ENCODE measurements at regions of chr1 and their contacts with region 1.

Region 1: GRCh38 chr1:50929376-50929958 is 30.6 kb downstream of the FAF1 start:
- DNase-seq: no peak
- ATAC-seq: no peak

Region 2: GRCh38 chr1:50047916-50048694 is 881.4 kb before region 1 on chr1:
- intact Hi-C with region 1: no loop called
- DNase-seq: peak; percentile 29
- ATAC-seq: peak; percentile 71 to 88

Region 3: DNA sequence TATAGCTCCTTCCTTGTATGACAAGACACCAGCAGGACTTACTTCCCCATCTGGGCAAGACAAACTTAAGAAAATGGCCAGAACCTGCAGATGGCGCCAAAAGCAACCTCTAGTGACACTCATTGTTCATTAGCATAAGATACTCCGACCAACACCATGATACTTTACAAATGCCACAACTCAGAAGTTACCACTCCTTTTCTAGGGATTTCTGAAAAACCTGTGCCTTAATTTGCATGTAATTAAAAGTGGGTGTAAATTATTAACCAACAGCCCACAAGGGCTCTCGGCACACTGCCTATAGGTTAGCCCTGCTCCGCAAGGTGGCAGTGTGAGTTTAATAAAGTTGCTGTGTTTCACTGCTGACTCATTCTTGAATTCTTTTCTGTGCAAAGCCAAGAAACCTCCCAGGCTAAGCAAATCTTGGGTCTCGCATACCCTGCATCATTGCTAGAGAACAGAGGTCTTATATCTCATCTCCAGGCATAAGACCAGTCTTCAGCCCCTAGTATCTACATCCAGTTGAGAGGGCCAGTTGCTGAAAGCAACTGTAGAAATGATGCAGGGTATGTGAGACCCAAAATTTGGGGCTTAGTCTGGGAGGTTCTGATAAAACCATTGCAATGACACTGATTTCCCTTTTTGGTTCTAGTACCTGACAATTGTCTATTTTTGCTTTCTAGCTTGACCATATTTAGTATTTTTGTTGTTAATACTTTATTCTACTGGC is 55.8 kb before region 1 on chr1:
- intact Hi-C with region 1: no loop called
- DNase-seq: peak; percentile 39
- ATAC-seq: peak in 1 of 2 donors; percentile 40

Region 4: DNA sequence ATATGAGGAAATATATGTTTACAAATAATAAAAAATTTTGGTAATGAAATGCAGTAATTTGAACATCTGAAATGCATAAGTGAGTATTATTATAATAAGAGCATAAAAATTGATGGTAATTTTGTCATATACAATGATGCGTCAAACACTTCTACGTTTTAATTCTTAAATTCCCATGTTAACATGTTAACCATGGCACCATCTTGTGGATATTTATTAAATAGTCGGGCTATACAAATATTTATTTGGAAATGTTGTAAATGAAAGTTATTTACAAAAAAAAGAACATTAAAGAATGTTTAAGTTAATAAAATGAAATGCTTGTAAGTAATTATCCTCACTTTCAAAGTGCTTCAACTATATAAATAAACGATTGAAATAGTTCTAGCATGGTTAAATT is 115.4 kb after region 1 on chr1:
- intact Hi-C with region 1: loop called in 1 of 2 experiments (anchors 10 kb)
- DNase-seq: no peak
- ATAC-seq: no peak

Measured in left cardiac atrium (tissue), 4 donors.